ENCODE measurements at regions of chr2 and their contacts with region 1.

Region 1: DNA sequence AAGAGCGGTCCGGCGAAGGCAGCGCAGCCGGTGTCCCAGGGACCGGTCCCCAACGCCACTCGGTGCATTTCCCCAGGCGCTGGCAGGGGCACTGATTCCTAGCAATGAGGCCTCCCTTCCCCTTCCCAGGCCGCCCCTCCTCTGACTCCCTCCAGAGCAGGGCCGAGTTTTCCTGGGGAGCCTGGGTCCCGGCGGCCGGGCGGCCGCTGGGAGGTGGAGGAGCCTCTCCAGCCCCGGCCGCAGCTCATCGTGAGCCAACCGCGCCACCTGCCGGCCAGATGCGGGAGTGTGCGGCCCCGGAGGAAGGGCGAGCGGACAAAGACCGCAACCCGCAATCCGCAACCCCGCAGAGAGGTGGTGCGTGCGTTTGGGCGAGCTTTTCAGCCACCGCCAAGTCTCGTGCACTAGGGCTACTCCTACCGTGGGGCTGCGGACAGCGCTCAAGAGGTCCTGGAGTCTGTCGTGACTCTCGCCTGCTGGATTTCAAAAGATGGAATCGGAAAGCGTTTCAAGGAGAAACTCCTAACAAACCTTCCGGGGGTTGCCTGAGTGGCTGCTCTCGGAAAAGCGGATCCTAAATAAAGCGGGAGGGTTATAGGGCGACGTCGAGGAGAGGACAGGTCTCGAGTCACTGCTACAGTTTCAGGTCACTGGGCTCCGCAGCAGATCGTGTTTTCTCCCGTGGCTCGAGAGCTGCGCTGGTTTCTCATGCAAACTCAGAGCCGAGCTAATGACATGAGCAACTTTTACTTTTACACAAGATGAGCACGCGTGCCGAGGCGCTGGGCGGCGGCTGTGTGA is 1.5 kb upstream of the EPHA4 start:
- DNase-seq: peak; percentile 79 to 96
- H3K4me3 ChIP-seq: peak overlapping the region; percentile 87
- H3K27ac ChIP-seq: peak overlapping the region; percentile 51; the same call in 1 of the 2 replicates
- H3K4me1 ChIP-seq: peaks cover 15% of the 10 kb centered on the region
- H3K27me3 ChIP-seq: no peaks in the 10 kb centered on the region
- CTCF ChIP-seq: peak; percentile 100

Region 2: DNA sequence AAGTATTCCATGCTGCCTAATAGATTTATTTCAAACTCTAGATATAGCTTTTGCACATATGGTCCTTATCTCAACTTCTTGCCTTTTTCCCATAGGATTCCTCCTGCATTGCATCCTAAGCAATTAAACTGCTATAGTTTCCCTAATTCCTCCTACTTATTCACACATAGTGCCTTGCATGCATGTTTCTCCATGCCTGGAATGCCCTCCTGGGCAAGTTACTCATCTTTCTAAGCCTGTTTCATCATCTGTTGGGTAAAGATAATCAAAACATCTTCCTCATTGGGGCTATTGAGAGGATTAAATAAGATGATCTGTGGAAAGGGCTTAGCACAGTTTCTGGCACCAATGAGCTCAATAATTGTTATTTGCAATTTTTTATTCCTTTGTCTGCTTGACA is 1219.7 kb before region 1 on chr2:
- CTCF ChIA-PET with region 1: no interaction called
- POLR2A ChIA-PET with region 1: no interaction called
- intact Hi-C with region 1: loop called (anchors 10 kb)
- DNase-seq: no peak
- H3K4me3 ChIP-seq: no peak overlapping the region
- H3K27ac ChIP-seq: no peak overlapping the region
- H3K4me1 ChIP-seq: peaks cover 18% of the 10 kb centered on the region
- H3K27me3 ChIP-seq: no peaks in the 10 kb centered on the region
- CTCF ChIP-seq: no peak

Region 3: DNA sequence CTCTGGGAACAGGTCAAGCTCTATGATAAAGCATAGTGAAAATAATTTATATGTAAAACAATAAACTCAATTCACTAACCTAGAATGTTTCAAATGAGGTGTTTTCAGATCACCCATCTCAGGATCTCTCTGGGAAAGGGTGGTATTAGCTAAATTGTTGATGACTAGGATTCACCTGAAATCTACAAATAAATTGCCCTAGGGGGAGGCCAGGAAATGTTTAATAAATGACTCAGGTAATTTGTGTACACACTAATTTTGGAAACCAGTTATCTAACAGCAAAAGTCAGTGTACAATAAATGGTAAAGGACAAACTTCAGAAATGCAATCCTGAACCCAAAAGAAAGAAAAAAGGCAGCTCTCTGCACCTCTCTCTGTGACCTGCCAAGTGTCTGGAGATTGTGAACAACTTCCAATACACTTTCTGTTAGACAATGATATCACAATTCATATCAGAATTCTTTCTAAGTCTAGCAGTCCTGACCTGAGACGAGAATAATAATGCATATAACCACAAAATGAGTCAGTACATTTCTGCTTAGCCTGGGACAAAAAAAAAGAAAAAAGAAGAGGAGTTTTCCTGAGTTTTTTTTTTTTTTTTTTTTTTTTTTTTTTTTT is 761.6 kb before region 1 on chr2:
- CTCF ChIA-PET with region 1: no interaction called
- POLR2A ChIA-PET with region 1: no interaction called
- intact Hi-C with region 1: loop called (anchors 2 kb)
- DNase-seq: peak; percentile 27 to 89
- H3K4me3 ChIP-seq: peak overlapping the region; percentile 32; the same call in 1 of the 2 replicates
- H3K27ac ChIP-seq: peak overlapping the region; percentile 87
- H3K4me1 ChIP-seq: peaks cover 32% of the 10 kb centered on the region
- H3K27me3 ChIP-seq: no peaks in the 10 kb centered on the region
- CTCF ChIP-seq: no peak

Region 4: DNA sequence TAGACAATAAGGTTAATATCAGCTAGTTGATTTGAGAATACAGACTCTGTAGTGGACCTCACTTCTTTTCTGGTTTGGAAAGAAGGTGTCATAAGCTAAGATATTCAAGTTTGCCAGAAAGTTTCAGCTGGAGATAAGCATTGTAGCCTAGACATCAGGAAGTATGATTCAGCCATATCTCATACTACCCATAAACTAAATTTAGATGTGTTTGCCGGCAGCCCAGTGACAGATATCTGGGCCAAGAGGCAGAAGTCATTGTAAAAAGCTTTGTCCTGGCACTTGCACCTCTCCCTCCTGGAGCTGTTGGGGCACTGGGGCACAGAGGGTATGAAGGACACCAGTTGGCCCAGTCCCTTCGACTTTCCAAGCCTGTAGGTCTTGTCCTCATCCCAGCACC is 129.5 kb before region 1 on chr2:
- CTCF ChIA-PET with region 1: interaction called, 4 read pairs
- POLR2A ChIA-PET with region 1: no interaction called
- intact Hi-C with region 1: loop called (anchors 1 kb)
- DNase-seq: peak; percentile 65 to 97
- H3K4me3 ChIP-seq: peak overlapping the region; percentile 8; the same call in 1 of the 2 replicates
- H3K27ac ChIP-seq: peak overlapping the region; percentile 58
- H3K4me1 ChIP-seq: peaks cover 58% of the 10 kb centered on the region
- H3K27me3 ChIP-seq: no peaks in the 10 kb centered on the region
- CTCF ChIP-seq: no peak

Region 5: GRCh38 chr2:221546505-221547225 is 27.0 kb before region 1 on chr2:
- CTCF ChIA-PET with region 1: interaction called, 10 read pairs
- POLR2A ChIA-PET with region 1: no interaction called
- intact Hi-C with region 1: no loop called
- DNase-seq: peak; percentile 46 to 97
- H3K4me3 ChIP-seq: no peak overlapping the region; the same call in 1 of the 2 replicates
- H3K27ac ChIP-seq: peak overlapping the region; percentile 74
- H3K4me1 ChIP-seq: peaks cover 25% of the 10 kb centered on the region
- H3K27me3 ChIP-seq: no peaks in the 10 kb centered on the region
- CTCF ChIP-seq: 0 out of 2 replicates have a peak, but pooled peaks have one; percentile 12

Region 6: DNA sequence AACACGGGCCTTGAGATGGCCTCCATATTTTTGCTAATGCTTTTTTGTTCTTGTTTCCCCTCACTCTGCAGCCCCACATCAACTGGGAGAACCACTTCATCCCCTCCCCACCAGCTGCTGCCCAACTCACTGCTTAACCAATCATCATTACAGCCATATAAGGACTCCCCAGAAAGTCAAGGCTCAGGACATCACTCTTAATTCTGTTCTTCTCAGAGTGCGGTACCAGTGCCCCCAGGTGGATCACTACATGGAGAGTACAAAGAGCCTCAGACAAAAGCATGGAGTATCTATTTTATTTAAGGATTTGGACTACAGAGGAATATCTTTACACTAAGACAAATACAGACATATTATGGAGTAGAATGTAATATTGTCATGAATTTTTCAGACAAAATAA is 384.6 kb after region 1 on chr2:
- CTCF ChIA-PET with region 1: no interaction called
- POLR2A ChIA-PET with region 1: no interaction called
- intact Hi-C with region 1: loop called (anchors 1 kb)
- DNase-seq: peak in 1 of 2 experiments; percentile 26
- H3K4me3 ChIP-seq: no peak overlapping the region
- H3K27ac ChIP-seq: no peak overlapping the region
- H3K4me1 ChIP-seq: peaks cover 7% of the 10 kb centered on the region; the same call in 1 of the 2 replicates
- H3K27me3 ChIP-seq: no peaks in the 10 kb centered on the region
- CTCF ChIP-seq: peak; percentile 35; the same call in 1 of the 2 replicates

Measured in PC-9 (cell line).